Posterior vena cava (tissue), 2 donors: ENCODE measurements at regions of chr2 and their contacts with region 1.

Region 1: DNA sequence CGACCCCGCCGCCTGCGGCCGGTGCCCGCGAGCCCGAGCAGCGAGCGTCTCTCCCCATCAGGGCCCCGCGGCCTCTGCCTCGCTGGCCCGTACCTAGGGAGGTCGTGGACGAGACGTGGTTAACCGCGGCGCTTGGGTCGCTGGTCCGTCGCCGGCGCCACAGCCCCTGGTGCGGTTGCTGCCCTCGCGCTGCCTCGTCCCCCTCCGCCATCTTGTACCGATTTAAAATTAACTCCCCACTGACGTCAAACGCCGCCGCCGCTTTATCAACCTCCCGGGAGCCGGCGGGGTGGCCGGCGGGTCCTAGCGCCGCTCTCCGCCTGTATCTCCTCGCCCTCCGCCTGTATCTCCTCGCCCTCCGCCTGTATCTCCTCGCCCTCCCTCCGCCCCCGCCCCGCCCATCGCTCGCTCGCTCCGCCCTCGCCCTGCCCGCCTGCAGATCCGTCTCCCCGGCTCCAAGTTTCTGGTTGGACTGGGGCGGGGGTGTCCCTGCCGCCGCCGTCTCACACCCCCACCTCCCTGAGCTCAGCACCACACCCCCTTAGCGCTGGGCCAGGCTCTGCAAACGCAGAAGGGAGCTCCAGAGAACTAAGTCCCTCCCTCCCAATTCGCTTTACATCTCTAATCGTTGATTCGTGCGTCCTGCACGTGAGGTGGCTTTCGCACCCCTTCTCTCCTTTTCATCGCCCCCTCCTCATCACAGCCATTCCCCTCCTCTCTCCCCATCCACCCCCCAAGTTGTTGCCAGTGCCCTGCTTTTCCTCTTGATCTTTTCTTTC is at the start of gene ATL2:
- DNase-seq: peak; percentile 99
- total RNA-seq, gene ATL2: 69.2 to 72.4 TPM

Region 2: DNA sequence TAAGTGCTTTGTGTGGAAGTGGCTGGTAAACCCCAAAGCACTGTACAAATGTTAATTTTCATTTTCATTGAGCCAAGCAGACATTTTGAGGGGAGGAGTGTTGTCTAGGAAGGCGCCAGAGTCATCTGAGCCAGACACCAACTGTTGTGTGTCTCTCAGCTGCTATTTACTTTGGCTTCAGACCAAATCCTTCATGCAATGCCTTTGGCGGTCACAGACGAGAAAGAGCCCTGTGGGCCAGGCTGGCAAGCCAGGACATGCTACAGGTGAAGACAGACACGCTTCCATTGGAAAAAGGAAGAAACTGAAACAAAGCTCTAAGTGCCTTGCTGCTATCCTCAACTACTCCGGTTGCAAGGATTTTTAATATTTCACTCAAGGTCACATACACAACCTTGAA is 590.4 kb before region 1 on chr2:
- intact Hi-C with region 1: no loop called
- DNase-seq: no peak

Region 3: DNA sequence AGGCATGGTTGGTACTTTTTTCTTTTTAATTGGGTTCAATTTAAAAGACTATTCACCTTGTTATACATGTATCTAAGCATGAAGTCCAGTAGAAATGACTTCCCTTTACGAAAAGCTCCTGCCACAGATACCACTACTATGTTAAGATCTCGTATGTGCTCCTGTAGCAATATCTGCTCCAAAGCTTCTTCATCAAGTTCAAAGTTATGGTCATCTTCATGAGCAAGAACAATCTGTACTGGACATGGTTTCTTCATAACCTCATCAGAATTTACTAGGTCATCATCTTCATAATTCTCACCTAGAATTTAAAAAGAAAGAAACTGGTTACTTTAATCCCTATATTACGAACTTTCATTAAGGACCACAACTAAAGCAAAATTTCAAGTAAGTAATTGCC is 34.0 kb before region 1 on chr2:
- intact Hi-C with region 1: loop called in 1 of 2 experiments (anchors 1 kb)
- DNase-seq: no peak

Region 4: DNA sequence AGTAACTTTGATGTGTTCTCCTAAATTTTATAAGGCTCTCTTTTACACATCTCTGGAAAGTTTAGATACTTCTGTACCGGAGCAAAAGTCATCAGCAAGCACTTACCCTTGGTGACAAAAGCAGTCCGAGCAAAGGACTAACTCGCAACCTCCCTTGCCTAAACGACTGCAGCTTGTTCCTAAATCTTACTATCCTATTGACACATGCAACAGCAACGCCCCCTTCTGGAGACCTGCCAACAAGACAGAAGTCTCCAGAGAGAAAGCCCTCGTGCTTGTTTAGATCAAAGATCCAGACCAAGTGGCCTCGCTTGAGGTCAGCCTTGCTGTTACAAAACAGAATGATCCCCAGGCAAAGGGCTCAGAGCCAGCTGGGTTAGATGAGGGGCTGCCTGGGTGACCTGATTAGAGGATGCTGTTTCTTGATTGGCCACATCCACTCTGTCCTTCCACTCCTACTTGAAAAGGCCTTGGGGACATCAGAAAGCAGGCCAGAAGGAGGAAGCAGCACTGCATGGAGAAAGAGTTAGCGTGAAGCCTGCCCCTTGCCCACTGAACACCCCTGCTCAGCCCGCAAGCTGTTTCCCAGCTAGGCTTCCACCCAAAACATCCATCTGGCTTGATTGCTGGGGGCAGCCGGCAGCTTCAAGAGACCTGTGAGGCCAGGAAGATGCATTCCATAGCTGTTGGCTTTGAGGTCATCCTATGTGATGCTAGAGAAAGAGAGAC is 131.2 kb after region 1 on chr2:
- intact Hi-C with region 1: loop called in 1 of 2 experiments (anchors 10 kb)
- DNase-seq: peak; percentile 93